Prostate gland (tissue), 2 donors: ENCODE measurements at regions of chr10 and their contacts with region 1.

Region 1: DNA sequence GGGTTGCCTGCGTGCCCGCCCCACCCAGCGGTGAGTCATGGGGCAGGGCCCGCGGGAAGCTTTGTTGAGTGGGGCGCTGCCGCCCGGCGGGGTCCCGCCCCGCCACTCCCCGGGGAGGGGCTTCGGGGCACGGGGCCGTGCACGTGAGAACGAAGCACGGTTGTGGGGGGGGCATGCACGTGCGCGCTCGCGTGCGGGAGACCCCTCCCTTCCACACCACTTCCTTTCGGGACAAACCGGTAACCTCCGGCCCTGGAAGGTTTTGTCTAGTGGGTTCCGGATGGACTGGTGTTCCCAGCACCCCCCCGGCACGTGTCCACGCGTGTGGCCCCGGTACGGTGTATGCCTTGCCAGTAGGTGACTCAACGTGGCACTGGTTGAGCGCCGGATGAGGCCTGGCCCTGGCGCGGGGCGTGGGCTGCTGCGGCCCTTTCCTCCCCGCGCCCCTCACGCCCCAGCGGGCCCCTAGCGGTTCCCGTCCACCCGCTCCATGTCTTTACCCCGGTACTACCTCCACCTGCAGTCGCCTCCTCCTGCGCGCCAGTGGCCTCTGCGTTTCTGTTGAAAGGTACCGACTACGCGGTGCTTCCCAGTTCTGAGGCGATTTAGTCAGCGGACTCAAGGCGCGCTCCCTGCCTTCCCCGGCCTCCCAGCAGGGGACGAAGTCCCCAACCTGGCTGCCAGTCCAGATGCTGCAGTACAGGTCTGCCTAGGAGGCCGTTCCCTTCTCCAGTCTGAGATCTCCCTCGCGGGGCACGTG is 3.1 kb downstream of the ADIRF start:
- DNase-seq: peak; percentile 91
- H3K4me3 ChIP-seq: peak overlapping the region; percentile 48 to 58
- H3K27ac ChIP-seq: peak overlapping the region; percentile 97 to 98
- H3K4me1 ChIP-seq: peaks cover 4% of the 10 kb centered on the region
- H3K27me3 ChIP-seq: no peaks in the 10 kb centered on the region
- CTCF ChIP-seq: peak in 1 of 4 experiments; percentile 28
- POLR2A ChIP-seq: no peak

Region 2: GRCh38 chr10:85810674-85811073 is 1160.7 kb before region 1 on chr10:
- intact Hi-C with region 1: no loop called
- DNase-seq: no peak
- H3K4me3 ChIP-seq: no peak overlapping the region
- H3K27ac ChIP-seq: no peak overlapping the region
- H3K4me1 ChIP-seq: no peaks in the 10 kb centered on the region
- H3K27me3 ChIP-seq: no peaks in the 10 kb centered on the region
- CTCF ChIP-seq: no peak
- POLR2A ChIP-seq: no peak

Region 3: GRCh38 chr10:87094373-87095235 is 123.2 kb after region 1 on chr10 and contains the starts of genes GLUD1 and SHLD2:
- intact Hi-C with region 1: loop called (anchors 2 kb)
- DNase-seq: peak; percentile 95
- H3K4me3 ChIP-seq: peak within 1 kb of the TSS; percentile 83 to 86
- H3K27ac ChIP-seq: peak within 1 kb of the TSS; percentile 94 to 96
- H3K4me1 ChIP-seq: no peaks in the 10 kb centered on the region
- H3K27me3 ChIP-seq: no peaks in the 10 kb centered on the region
- CTCF ChIP-seq: peak in 2 of 4 experiments; percentile 27 to 31
- POLR2A ChIP-seq: peak; percentile 69
- total RNA-seq, gene GLUD1: 154 to 437 TPM
- total RNA-seq, gene SHLD2: 25.2 to 43.5 TPM